Activated naive CD4-positive, alpha-beta T cell treated with anti-CD3 and anti-CD28 coated beads, Interleukin-2, amount 10 ng/mL, durations not matched to agents 7 days and 5 days (primary cell): ENCODE measurements at regions of chr19 and their contacts with region 1.

Region 1: GRCh38 chr19:13093407-13094105 is 9.1 kb downstream of the LYL1 start:
- DNase-seq: peak; percentile 87
- H3K4me3 Mint-ChIP-seq: no peak overlapping the region
- H3K27ac Mint-ChIP-seq: no peak overlapping the region
- H3K4me1 Mint-ChIP-seq: peaks cover 34% of the 10 kb centered on the region
- H3K27me3 Mint-ChIP-seq: peaks cover 74% of the 10 kb centered on the region

Region 2: GRCh38 chr19:12965017-12965811 is 128.3 kb before region 1 on chr19:
- CTCF ChIA-PET with region 1: interaction called, 28 read pairs
- DNase-seq: peak; percentile 87
- H3K4me3 Mint-ChIP-seq: peak overlapping the region; percentile 90
- H3K27ac Mint-ChIP-seq: peak overlapping the region; percentile 89
- H3K4me1 Mint-ChIP-seq: peaks cover 10% of the 10 kb centered on the region
- H3K27me3 Mint-ChIP-seq: peaks cover 28% of the 10 kb centered on the region

Region 3: GRCh38 chr19:12974301-12975220 is 119.0 kb before region 1 on chr19:
- CTCF ChIA-PET with region 1: interaction called, 76 read pairs
- DNase-seq: no peak
- H3K4me3 Mint-ChIP-seq: no peak overlapping the region
- H3K27ac Mint-ChIP-seq: no peak overlapping the region
- H3K4me1 Mint-ChIP-seq: peaks cover 2% of the 10 kb centered on the region
- H3K27me3 Mint-ChIP-seq: peaks cover 59% of the 10 kb centered on the region

Region 4: GRCh38 chr19:12983542-12984142 is 109.9 kb before region 1 on chr19:
- CTCF ChIA-PET with region 1: interaction called, 76 read pairs
- DNase-seq: peak; percentile 80
- H3K4me3 Mint-ChIP-seq: no peak overlapping the region
- H3K27ac Mint-ChIP-seq: no peak overlapping the region
- H3K4me1 Mint-ChIP-seq: no peaks in the 10 kb centered on the region
- H3K27me3 Mint-ChIP-seq: peaks cover 20% of the 10 kb centered on the region

Region 5: DNA sequence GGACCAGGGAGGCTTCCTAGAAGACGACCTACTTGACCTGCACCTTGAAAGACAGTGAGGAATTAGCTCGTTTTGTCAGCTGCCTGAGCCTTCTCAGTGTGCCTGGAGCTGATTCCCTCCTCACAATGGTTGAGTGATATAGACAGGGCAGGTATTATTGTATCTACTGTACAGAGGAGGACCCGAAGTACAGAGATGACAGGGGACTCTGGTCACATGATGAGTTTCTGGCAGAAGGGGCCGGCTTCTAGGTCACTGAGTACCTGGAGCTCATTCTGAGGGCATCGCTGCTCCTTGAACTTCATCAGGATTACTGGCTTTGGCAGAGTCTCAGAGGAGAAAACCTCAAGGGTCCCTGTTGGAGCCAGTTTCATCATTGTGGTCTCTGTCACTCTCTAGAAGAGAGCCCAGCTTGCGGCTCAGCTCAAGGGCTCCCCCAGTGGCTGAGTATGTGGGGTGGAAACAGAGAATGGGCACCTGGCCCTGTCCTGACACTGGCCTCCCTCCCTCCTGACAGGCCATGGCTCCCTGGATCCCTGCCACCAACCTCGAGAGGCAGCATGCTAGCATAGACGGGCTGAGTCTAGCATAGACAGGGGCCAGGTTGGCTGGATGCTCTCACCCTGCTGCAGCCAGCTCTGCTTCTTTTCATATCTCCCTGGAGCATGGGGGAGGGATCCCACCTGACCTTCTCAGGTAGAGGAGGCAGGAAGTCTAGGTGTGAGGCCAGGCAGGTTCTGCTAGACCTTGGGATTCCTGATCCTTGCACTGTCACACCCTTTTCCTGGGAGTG is 59.5 kb before region 1 on chr19:
- CTCF ChIA-PET with region 1: interaction called, 11 read pairs
- DNase-seq: peak; percentile 63
- H3K4me3 Mint-ChIP-seq: no peak overlapping the region
- H3K27ac Mint-ChIP-seq: no peak overlapping the region
- H3K4me1 Mint-ChIP-seq: no peaks in the 10 kb centered on the region
- H3K27me3 Mint-ChIP-seq: peaks cover 13% of the 10 kb centered on the region

Region 6: DNA sequence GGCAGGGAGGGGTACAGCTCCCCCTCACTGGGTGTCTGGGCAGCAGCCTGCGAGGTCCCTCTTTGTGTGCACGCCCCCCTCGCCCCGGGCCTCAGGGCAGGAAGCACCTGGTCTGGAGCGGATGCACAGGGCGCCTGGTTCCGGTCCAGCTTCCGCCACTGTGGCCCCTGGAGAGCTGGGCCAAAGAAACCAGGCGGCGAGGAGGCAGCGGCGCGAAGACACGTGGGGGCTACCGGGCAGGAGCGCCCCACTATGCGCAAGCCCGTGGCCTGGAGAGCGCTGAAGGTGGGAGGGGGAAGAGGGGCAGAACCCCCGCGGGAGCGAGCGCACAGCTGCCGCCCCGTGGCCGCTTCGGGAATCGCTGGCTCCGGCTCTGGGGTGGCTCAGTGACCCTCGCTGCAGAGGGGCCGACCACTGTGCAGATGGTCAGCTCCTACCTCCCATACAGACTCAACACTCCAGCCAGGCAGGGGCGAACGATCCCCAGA is 10.8 kb after region 1 on chr19:
- CTCF ChIA-PET with region 1: interaction called, 23 read pairs
- DNase-seq: peak; percentile 79
- H3K4me3 Mint-ChIP-seq: peak overlapping the region; percentile 82
- H3K27ac Mint-ChIP-seq: peak overlapping the region; percentile 88
- H3K4me1 Mint-ChIP-seq: peaks cover 48% of the 10 kb centered on the region
- H3K27me3 Mint-ChIP-seq: peaks cover 17% of the 10 kb centered on the region